ENCODE measurements at regions of chr2 and their contacts with region 1.

Region 1: DNA sequence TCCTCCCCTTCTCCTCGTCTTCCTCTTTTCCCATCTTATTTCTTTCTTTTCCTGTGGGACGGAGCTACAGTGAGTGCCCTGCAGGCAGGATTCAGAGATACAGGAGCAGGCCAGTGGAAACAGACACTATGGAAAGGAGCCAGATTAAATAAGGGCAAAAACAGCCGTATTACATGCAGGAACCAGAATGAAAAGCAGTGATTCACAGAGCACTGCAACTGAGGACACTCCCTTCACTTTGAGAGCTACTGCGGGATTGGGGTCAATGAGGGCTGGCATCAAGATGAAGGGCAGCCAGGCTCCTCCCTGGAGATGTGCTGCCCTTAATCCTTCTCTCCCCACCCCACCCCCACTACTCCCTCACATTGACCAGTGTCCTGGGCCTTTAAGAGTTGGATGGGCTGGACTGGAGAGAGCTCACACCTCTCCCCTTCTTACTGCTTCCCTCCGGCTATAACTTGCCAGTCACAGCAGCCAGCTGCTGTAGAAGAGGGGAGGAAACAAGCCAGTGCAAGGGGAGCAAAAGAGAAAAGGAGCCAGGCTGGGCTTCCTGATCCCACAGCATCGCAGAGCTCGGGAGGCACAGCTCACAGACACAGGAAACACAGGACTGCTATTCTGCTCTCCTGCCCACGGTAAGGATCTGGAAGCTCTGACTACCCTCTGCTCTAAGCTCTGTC is at the start of gene PLCD4:
- DNase-seq: peak; percentile 38 to 75
- ATAC-seq: peak; percentile 81 to 89 (median 86)
- H3K4me3 ChIP-seq: peak within 1 kb of the TSS; percentile 70
- H3K27ac ChIP-seq: peak within 1 kb of the TSS; percentile 75
- H3K4me1 ChIP-seq: peaks cover 51% of the 10 kb centered on the region
- H3K27me3 ChIP-seq: no peaks in the 10 kb centered on the region
- CTCF ChIP-seq: no peak
- total RNA-seq, gene PLCD4: 20.3 to 85.2 (median 43.0) TPM

Region 2: GRCh38 chr2:218582076-218582475 is 25.5 kb before region 1 on chr2:
- intact Hi-C with region 1: loop called in 1 of 2 experiments (anchors 1 kb)
- DNase-seq: no peak
- ATAC-seq: no peak
- H3K4me3 ChIP-seq: no peak overlapping the region
- H3K27ac ChIP-seq: no peak overlapping the region
- H3K4me1 ChIP-seq: peaks cover 27% of the 10 kb centered on the region
- H3K27me3 ChIP-seq: no peaks in the 10 kb centered on the region
- CTCF ChIP-seq: no peak